Activated B cell treated with CpG ODN at 0.5 μM for 24 hours (primary cell): ENCODE measurements at regions of chr6 and their contacts with region 1.

Region 1: DNA sequence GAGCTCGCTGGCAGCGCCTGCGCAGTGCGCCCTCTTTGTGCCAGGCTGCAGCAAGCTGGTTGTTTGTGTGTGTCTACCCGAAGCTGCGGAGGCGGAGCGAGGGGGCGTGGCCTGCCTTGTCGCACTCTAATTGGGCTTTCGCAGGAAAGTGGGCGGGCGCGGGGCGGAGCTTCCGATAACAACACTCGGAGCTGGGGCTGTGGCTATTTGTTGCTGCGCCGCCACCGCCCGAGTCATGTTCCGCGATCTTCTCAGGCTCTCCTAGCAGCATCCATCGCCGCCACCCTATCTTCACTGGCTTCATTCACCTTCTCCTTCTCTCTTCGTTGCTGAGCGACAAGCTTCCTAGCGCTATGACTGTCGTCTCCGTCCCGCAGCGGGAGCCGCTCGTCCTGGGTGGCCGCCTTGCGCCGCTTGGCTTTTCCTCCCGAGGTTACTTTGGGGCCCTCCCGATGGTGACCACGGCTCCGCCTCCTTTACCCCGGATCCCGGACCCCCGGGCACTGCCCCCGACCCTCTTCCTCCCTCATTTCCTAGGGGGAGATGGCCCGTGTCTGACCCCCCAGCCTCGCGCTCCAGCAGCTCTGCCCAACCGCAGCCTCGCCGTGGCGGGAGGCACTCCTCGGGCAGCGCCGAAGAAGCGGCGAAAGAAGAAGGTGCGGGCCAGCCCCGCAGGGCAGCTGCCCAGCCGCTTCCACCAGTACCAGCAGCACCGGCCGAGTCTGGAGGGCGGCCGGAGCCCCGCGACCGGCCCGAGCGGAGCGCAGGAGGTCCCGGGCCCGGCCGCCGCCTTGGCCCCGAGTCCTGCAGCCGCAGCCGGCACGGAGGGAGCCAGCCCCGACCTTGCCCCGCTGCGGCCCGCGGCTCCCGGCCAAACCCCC is at the start of gene PNRC1:
- DNase-seq: peak; percentile 100
- ATAC-seq: peak; percentile 77
- H3K4me3 Mint-ChIP-seq: peak within 1 kb of the TSS; percentile 95
- H3K27ac Mint-ChIP-seq: peak within 1 kb of the TSS; percentile 99
- H3K4me1 Mint-ChIP-seq: peaks cover 39% of the 10 kb centered on the region
- H3K27me3 Mint-ChIP-seq: no peaks in the 10 kb centered on the region
- CTCF ChIP-seq: no peak
- total RNA-seq, gene PNRC1: 220 and 229 TPM in 2 replicates

Region 2: GRCh38 chr6:88177961-88178464 is 902.8 kb before region 1 on chr6:
- CTCF ChIA-PET with region 1: no interaction called
- POLR2A ChIA-PET with region 1: no interaction called
- intact Hi-C with region 1: loop called (anchors 5 kb)
- DNase-seq: no peak
- ATAC-seq: peak; percentile 75
- H3K4me3 Mint-ChIP-seq: peak overlapping the region; percentile 36
- H3K27ac Mint-ChIP-seq: peak overlapping the region; percentile 77
- H3K4me1 Mint-ChIP-seq: peaks cover 54% of the 10 kb centered on the region
- H3K27me3 Mint-ChIP-seq: no peaks in the 10 kb centered on the region
- CTCF ChIP-seq: no peak

Region 3: DNA sequence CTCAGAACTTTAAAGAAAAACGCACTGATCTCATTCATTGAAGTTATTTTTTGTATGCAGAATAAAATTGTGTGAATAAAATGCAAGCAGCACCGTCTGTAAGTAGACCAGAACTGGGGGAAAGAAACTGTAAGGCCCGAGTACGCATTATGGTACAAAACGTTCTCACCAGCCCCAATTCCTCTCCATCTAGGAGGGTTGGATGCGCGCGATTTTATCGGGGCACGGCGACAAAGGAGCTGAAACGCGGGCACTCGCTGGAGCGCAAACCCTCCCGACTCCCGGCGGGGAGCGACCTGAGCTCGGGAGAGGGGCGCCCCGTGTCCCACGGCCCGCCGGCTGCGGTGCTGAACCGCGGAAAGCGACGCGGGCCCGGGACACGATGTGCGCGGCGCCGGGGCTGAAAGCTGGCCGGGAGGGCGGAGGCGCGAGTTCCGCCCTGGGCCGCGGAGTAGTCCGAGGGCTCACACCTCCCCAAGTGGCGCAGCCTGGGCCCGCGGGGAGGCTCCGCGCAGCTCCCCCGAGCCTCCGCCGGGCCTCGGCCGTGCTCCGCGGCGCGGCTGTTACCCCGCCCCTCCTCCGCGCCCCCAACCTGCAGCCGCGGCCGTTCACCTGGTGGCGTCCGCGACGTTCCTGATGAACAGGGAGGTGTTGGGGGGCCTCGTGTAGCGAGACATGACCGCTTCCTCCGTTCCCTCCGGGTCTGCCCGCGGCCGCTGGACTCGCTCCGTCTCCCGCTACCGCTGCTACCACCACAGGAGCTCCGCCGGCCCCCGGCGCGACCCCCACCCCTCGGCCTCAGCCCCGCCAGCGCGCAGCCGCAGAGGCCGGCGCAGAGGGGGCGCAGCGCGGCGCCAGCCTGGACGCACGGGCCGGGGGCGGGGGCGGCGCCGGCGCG is 36.7 kb after region 1 on chr6 and contains the start of gene SRSF12:
- CTCF ChIA-PET with region 1: no interaction called
- POLR2A ChIA-PET with region 1: interaction called, 25 read pairs
- intact Hi-C with region 1: loop called (anchors 2 kb)
- DNase-seq: peak; percentile 43
- ATAC-seq: peak; percentile 81
- H3K4me3 Mint-ChIP-seq: peak within 1 kb of the TSS; percentile 80
- H3K27ac Mint-ChIP-seq: no peak within 1 kb of the TSS
- H3K4me1 Mint-ChIP-seq: peaks cover 6% of the 10 kb centered on the region
- H3K27me3 Mint-ChIP-seq: peaks cover 14% of the 10 kb centered on the region
- CTCF ChIP-seq: no peak
- total RNA-seq, gene SRSF12: not detected in 2 replicates

Region 4: GRCh38 chr6:89360415-89360999 is 279.7 kb after region 1 on chr6:
- CTCF ChIA-PET with region 1: no interaction called
- POLR2A ChIA-PET with region 1: interaction called, 34 read pairs
- intact Hi-C with region 1: no loop called
- DNase-seq: no peak
- ATAC-seq: peak; percentile 34
- H3K4me3 Mint-ChIP-seq: no peak overlapping the region
- H3K27ac Mint-ChIP-seq: peak overlapping the region; percentile 72
- H3K4me1 Mint-ChIP-seq: peaks cover 79% of the 10 kb centered on the region
- H3K27me3 Mint-ChIP-seq: no peaks in the 10 kb centered on the region
- CTCF ChIP-seq: no peak

Region 5: DNA sequence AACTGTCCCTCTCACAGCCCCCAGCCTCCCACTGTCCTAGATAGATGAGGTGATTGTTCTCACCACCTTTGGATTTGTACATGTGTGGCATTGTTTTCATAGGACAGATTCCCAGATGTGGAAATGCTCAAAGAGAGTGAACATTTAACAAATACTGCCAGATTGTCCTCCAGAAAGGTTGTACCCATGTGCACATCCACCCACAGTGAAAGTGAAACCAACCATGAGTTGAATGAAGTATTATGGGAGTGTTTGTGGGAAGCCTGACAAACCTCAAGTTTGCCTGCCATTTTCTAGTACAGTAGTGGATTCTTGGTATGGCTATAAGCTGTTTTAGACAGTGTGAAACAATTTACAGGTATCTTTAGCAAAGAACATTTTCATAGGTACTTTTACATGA is 394.9 kb after region 1 on chr6:
- CTCF ChIA-PET with region 1: no interaction called
- POLR2A ChIA-PET with region 1: no interaction called
- intact Hi-C with region 1: no loop called
- DNase-seq: no peak
- ATAC-seq: no peak
- H3K4me3 Mint-ChIP-seq: no peak overlapping the region
- H3K27ac Mint-ChIP-seq: no peak overlapping the region
- H3K4me1 Mint-ChIP-seq: peaks cover 8% of the 10 kb centered on the region
- H3K27me3 Mint-ChIP-seq: no peaks in the 10 kb centered on the region
- CTCF ChIP-seq: no peak

Region 6: GRCh38 chr6:89562118-89562973 is 481.6 kb after region 1 on chr6:
- CTCF ChIA-PET with region 1: no interaction called
- POLR2A ChIA-PET with region 1: no interaction called
- intact Hi-C with region 1: no loop called
- DNase-seq: no peak
- ATAC-seq: no peak
- H3K4me3 Mint-ChIP-seq: no peak overlapping the region
- H3K27ac Mint-ChIP-seq: no peak overlapping the region
- H3K4me1 Mint-ChIP-seq: no peaks in the 10 kb centered on the region
- H3K27me3 Mint-ChIP-seq: peaks cover 3% of the 10 kb centered on the region
- CTCF ChIP-seq: no peak

Region 7: DNA sequence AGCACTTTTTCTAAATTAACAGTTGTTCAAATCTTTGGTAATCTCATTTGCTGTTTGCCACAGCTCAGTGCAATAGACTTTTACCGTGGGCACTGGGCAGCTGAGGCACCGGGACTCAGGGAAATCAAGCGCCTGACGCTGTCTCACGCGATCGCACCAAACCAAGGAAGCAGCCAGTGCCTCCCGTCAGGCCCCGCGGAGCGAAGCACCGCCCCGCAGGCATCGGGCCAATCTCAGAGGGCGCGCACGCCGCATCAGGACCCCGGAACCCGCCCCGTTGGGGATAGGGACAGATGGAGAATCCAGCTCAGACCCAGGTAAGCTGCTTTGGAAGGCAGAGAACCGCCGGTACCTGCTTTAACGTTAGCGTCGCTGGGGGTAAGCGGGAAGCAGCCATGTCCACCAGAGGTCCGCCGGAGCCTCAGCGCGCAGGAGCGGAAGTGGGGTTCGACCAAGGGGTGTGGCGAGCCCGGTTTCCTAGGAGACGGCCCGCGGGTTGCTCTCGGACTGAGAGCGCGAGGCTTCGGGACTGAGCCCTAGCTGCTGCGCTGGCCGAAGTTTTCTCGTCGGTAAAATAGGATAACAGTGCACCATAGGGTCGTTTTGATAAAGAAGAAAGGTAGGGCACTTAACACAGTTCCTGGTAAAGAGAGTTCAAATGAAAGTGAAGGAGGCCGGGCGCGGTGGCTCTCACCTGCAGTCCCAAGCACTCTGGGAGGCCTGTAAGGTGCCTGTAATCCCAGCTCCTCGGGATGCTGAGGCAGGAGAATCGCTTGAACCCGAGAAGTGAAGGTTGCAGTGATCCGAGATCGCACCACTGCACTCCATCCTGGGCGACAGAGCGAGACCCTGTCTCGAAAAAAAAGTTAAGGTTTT is 557.8 kb after region 1 on chr6 and contains the start of gene LYRM2:
- CTCF ChIA-PET with region 1: no interaction called
- POLR2A ChIA-PET with region 1: interaction called, 25 read pairs
- intact Hi-C with region 1: loop called (anchors 1 kb)
- DNase-seq: peak; percentile 89
- ATAC-seq: peak; percentile 93
- H3K4me3 Mint-ChIP-seq: peak within 1 kb of the TSS; percentile 90
- H3K27ac Mint-ChIP-seq: peak within 1 kb of the TSS; percentile 92
- H3K4me1 Mint-ChIP-seq: peaks cover 28% of the 10 kb centered on the region
- H3K27me3 Mint-ChIP-seq: no peaks in the 10 kb centered on the region
- CTCF ChIP-seq: no peak
- total RNA-seq, gene LYRM2: 41.9 and 44.9 TPM in 2 replicates